Esophagus squamous epithelium (tissue), 5 donors: ENCODE measurements at regions of chr22 and their contacts with region 1.

Region 1: GRCh38 chr22:22959147-22959827 is 71.7 kb downstream of the IGLL5 start:
- DNase-seq: no peak
- H3K4me3 ChIP-seq: no peak overlapping the region
- H3K27ac ChIP-seq: no peak overlapping the region
- H3K4me1 ChIP-seq: peaks cover 0 to 5% (median 0%) of the 10 kb centered on the region in 3 donors
- H3K27me3 ChIP-seq: peaks cover 0 to 35% (median 0%) of the 10 kb centered on the region in 4 donors
- CTCF ChIP-seq: peak; percentile 80 to 95 (median 87)
- POLR2A ChIP-seq: no peak

Region 2: DNA sequence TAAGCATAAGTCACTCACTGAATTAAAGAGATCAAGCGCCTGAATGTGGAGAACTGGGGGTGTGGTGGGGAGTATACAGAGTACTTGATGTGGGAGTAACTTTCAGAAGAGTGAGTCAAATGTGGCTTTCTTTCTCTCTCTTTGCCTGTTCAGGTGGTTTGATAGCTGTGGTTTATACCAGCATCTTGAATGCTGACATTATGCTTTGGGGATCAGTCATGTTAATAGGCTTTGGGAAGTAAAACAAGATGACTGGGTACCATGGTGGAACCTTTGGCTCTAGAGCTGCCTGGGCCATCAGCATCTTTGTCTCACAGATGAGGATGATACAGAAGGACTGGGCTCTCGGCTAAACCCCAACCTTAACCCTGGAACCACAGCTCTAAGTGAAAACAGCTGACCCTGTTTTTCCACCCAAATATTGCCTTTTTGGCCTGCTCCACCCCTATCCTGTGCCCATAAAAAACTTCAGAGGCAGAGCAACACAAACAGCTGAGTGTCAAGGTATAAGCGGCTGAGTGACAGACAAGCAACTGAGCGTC is 52.9 kb after region 1 on chr22:
- intact Hi-C with region 1: no loop called
- DNase-seq: no peak
- H3K4me3 ChIP-seq: no peak overlapping the region
- H3K27ac ChIP-seq: no peak overlapping the region
- H3K4me1 ChIP-seq: no peaks in the 10 kb centered on the region
- H3K27me3 ChIP-seq: peaks cover 0 to 17% (median 0%) of the 10 kb centered on the region in 4 donors
- CTCF ChIP-seq: no peak
- POLR2A ChIP-seq: no peak

Region 3: DNA sequence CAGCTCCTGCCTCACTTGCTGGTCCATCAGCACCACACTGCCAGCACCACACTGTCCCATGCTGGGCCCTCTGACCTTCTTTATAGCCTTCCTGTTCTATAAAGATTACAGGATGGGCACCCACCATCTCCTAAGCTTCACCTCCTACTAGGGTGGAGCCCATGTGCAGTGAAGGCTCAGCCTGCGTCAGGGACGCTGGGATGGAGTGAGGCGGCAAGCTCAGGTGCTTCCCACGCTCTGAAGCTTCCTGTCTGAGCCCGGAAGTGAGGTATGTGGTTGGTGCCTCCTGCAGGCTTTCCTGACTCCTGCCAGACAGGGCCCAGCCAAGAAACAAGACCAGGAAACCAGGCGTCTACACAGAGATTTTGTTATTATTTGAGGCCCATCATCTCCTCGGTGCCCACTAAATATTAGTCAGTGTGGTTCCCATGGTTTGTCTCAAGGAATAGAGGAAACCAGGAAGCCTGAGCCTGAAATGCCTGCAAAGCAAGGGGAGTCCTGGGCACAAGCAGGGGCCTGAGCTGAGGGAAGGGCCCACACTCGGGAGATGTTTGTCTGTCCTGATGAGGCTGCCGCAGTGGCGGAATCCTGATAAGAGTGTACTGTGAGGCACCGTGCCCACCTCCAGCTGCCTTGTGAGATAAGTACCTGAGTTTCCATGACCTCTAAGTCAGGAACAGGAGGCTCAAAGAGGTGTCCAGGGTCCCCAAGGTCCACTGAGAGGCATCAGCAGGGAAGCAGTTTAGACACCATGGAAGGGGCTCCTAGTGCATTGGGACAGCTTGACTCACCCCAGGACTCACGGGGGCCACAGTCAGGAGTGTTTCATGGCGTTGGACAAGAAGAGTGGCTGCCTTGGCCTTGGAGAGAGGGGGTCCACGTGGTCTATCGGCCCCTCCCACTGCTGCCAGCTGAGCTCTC is 160.5 kb after region 1 on chr22:
- intact Hi-C with region 1: loop called (anchors 5 kb)
- DNase-seq: no peak
- H3K4me3 ChIP-seq: no peak overlapping the region
- H3K27ac ChIP-seq: no peak overlapping the region
- H3K4me1 ChIP-seq: no peaks in the 10 kb centered on the region
- H3K27me3 ChIP-seq: no peaks in the 10 kb centered on the region
- CTCF ChIP-seq: no peak
- POLR2A ChIP-seq: no peak

Region 4: GRCh38 chr22:23305922-23306374 is 346.7 kb after region 1 on chr22:
- intact Hi-C with region 1: no loop called
- DNase-seq: no peak
- H3K4me3 ChIP-seq: peak overlapping the region in 1 of 4 donors; percentile 50
- H3K27ac ChIP-seq: peak overlapping the region; percentile 72 to 92 (median 90)
- H3K4me1 ChIP-seq: peaks cover 0 to 38% (median 19%) of the 10 kb centered on the region in 3 donors
- H3K27me3 ChIP-seq: no peaks in the 10 kb centered on the region
- CTCF ChIP-seq: no peak
- POLR2A ChIP-seq: no peak

Region 5: GRCh38 chr22:23385291-23386244 is 426.3 kb after region 1 on chr22:
- intact Hi-C with region 1: loop called (anchors 10 kb)
- DNase-seq: no peak
- H3K4me3 ChIP-seq: no peak overlapping the region
- H3K27ac ChIP-seq: no peak overlapping the region
- H3K4me1 ChIP-seq: peaks cover 0 to 17% (median 0%) of the 10 kb centered on the region in 3 donors
- H3K27me3 ChIP-seq: peaks cover 0 to 40% (median 0%) of the 10 kb centered on the region in 4 donors
- CTCF ChIP-seq: peak; percentile 96 to 100 (median 98)
- POLR2A ChIP-seq: no peak